WTC11 (cell line): ENCODE measurements at regions of chr12 and their contacts with region 1.

Region 1: GRCh38 chr12:11228296-11228879 is 41.1 kb downstream of the PRB3 start:
- DNase-seq: peak; percentile 76
- ATAC-seq: peak; percentile 100
- H3K4me3 Mint-ChIP-seq: no peak overlapping the region
- H3K27ac Mint-ChIP-seq: no peak overlapping the region
- H3K4me1 Mint-ChIP-seq: peaks cover 5% of the 10 kb centered on the region
- H3K27me3 Mint-ChIP-seq: no peaks in the 10 kb centered on the region
- CTCF ChIP-seq: peak; percentile 60

Region 2: DNA sequence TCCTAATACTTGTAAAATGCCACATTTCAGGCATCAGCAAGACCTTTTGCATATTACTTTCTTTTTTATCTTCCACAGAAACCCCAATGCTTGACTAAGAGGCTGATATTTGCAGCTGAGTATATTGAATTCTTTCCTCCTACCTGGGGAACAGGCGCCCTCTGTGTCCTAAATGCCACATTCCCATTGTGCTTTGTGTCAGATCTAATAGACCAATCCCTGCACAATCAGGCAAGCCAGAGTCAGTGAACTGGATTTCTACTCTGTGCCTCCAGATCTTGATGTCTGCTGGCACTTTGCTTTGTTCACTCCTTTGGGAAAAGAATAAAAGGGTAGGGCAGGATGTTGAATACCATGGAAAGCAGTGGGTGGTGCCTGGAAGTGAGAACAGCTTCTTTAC is 19.3 kb before region 1 on chr12:
- CTCF ChIA-PET with region 1: interaction called, 13 read pairs
- POLR2A ChIA-PET with region 1: no interaction called
- DNase-seq: peak; percentile 19
- ATAC-seq: peak; percentile 91
- H3K4me3 Mint-ChIP-seq: no peak overlapping the region
- H3K27ac Mint-ChIP-seq: no peak overlapping the region
- H3K4me1 Mint-ChIP-seq: peaks cover 5% of the 10 kb centered on the region
- H3K27me3 Mint-ChIP-seq: no peaks in the 10 kb centered on the region; the same call in 1 of the 2 replicates
- CTCF ChIP-seq: no peak

Region 3: GRCh38 chr12:11486623-11487444 is 258.4 kb after region 1 on chr12:
- CTCF ChIA-PET with region 1: interaction called, 20 read pairs
- POLR2A ChIA-PET with region 1: no interaction called
- DNase-seq: peak; percentile 69
- ATAC-seq: peak; percentile 55
- H3K4me3 Mint-ChIP-seq: no peak overlapping the region
- H3K27ac Mint-ChIP-seq: no peak overlapping the region
- H3K4me1 Mint-ChIP-seq: peaks cover 13% of the 10 kb centered on the region
- H3K27me3 Mint-ChIP-seq: no peaks in the 10 kb centered on the region; the same call in 1 of the 2 replicates
- CTCF ChIP-seq: peak; percentile 96